A673 (cell line): ENCODE measurements at regions of chr17 and their contacts with region 1.

Region 1: DNA sequence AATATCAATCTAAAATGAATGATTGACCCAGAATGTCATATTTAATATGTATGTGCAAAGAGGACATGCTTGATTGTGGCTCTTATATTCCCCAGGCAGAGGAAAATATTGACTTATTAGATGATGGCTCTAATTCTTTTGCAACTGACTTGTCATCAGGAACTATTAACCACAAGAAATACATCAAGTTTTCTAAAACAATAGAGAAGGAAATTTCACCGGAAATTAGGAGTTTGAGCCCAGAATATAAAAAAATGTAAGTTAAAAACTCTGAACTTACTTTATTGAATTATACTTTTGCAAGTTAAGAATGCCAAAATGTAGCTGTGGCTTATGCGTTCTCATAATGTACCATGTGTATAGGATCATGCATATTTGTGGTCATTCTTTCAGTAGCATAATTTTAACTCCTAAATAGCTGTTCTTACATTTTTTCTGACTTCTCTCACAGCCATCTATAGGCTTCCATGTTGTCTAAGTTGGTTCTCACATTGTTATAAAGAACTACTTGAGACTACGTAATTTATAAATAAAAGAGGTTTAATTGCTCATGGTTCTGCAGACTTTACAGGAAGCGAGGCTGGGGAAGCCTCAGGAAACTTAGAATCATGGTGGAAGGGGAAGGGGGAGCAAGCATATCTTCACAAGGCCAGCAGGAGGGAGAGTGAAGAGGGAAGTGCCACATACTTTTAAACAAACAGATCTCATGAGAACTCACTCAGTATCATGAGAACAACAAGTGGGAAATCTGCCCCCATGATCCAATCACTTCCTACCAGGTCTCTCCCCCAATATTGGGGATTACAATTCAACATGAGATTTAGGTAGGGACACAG is 11.6 kb downstream of the EFCAB13 start:
- DNase-seq: peak; percentile 1
- H3K4me3 ChIP-seq: no peak overlapping the region
- H3K27ac ChIP-seq: no peak overlapping the region
- H3K4me1 ChIP-seq: no peaks in the 10 kb centered on the region
- H3K27me3 ChIP-seq: no peaks in the 10 kb centered on the region
- CTCF ChIP-seq: no peak

Region 2: DNA sequence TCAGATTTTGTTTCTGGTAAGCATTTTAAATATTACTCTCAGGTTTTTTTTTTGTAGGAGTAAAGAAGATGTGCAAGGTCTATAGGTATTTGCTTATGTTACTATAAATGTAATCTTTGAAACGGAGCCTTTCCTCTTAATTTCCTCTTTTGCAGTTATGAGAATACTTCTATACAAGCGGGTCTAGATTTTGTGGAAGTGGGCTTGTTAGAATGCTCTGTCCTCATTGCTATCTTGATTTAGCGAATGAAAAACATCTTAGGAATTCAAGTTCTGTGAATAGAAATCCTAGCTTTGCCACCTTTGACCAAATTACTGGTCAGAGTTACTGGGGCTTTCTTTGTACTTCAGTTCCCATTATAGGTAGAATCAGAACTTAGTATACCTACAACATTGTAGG is 68.7 kb after region 1 on chr17:
- CTCF ChIA-PET with region 1: no interaction called
- POLR2A ChIA-PET with region 1: no interaction called
- intact Hi-C with region 1: loop called (anchors 10 kb)
- DNase-seq: no peak
- H3K4me3 ChIP-seq: no peak overlapping the region
- H3K27ac ChIP-seq: no peak overlapping the region
- H3K4me1 ChIP-seq: no peaks in the 10 kb centered on the region
- H3K27me3 ChIP-seq: no peaks in the 10 kb centered on the region
- CTCF ChIP-seq: no peak